WTC11 (cell line): ENCODE measurements at regions of chr1 and their contacts with region 1.

Region 1: GRCh38 chr1:36099681-36100341 is 11.1 kb downstream of the ADPRS start:
- DNase-seq: peak; percentile 92
- ATAC-seq: peak; percentile 76
- H3K4me3 Mint-ChIP-seq: no peak overlapping the region
- H3K27ac Mint-ChIP-seq: no peak overlapping the region
- H3K4me1 Mint-ChIP-seq: peaks cover 16% of the 10 kb centered on the region
- H3K27me3 Mint-ChIP-seq: no peaks in the 10 kb centered on the region
- CTCF ChIP-seq: peak; percentile 76

Region 2: GRCh38 chr1:36070349-36070748 is 29.5 kb before region 1 on chr1:
- CTCF ChIA-PET with region 1: no interaction called
- POLR2A ChIA-PET with region 1: no interaction called
- DNase-seq: no peak
- ATAC-seq: no peak
- H3K4me3 Mint-ChIP-seq: no peak overlapping the region
- H3K27ac Mint-ChIP-seq: no peak overlapping the region
- H3K4me1 Mint-ChIP-seq: peaks cover 11% of the 10 kb centered on the region
- H3K27me3 Mint-ChIP-seq: no peaks in the 10 kb centered on the region
- CTCF ChIP-seq: no peak

Region 3: GRCh38 chr1:36083993-36084738 is 15.6 kb before region 1 on chr1 and contains the start of gene TEKT2:
- CTCF ChIA-PET with region 1: interaction called, 11 read pairs
- POLR2A ChIA-PET with region 1: interaction called, 8 read pairs
- DNase-seq: peak; percentile 87
- ATAC-seq: peak; percentile 49
- H3K4me3 Mint-ChIP-seq: peak within 1 kb of the TSS; percentile 66
- H3K27ac Mint-ChIP-seq: no peak within 1 kb of the TSS
- H3K4me1 Mint-ChIP-seq: peaks cover 9% of the 10 kb centered on the region
- H3K27me3 Mint-ChIP-seq: peaks cover 2% of the 10 kb centered on the region
- CTCF ChIP-seq: no peak
- total RNA-seq, gene TEKT2: 1.9 to 2.5 TPM (median 2.0 TPM) in 3 replicates

Region 4: GRCh38 chr1:36128126-36128904 is 28.5 kb after region 1 on chr1:
- CTCF ChIA-PET with region 1: interaction called, 142 read pairs
- POLR2A ChIA-PET with region 1: no interaction called
- DNase-seq: no peak
- ATAC-seq: no peak
- H3K4me3 Mint-ChIP-seq: no peak overlapping the region
- H3K27ac Mint-ChIP-seq: no peak overlapping the region
- H3K4me1 Mint-ChIP-seq: peaks cover 13% of the 10 kb centered on the region
- H3K27me3 Mint-ChIP-seq: peaks cover 27% of the 10 kb centered on the region
- CTCF ChIP-seq: no peak

Region 5: DNA sequence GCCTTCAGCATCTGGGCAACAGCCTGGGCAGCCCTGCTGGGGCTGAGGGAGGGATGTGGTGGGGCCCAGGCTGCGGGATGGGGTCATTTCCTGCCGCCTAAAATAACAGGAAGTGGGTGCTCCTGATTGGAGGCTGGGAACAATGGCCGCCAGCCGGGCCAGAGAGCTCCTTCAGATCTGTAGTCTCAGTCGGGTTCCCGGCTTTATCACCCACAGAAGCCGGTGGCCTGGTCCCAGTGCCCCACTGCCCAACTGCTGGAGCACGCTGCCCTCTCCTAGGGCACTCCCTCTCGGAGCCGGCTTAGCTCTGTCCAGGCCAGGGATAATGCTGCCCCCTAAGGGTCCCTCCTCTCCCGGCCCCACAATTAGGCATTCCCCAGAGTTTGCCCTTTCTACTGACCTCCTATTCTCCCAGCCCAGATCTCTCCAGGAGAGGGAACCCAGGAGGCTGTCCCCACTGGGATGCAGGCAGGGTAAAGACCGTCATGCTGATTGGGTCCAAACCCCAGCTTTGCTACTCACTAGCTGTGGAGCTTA is 61.2 kb after region 1 on chr1:
- CTCF ChIA-PET with region 1: interaction called, 12 read pairs
- POLR2A ChIA-PET with region 1: no interaction called
- DNase-seq: peak; percentile 71
- ATAC-seq: peak; percentile 76
- H3K4me3 Mint-ChIP-seq: peak overlapping the region; percentile 67
- H3K27ac Mint-ChIP-seq: peak overlapping the region; percentile 88
- H3K4me1 Mint-ChIP-seq: peaks cover 41% of the 10 kb centered on the region
- H3K27me3 Mint-ChIP-seq: no peaks in the 10 kb centered on the region
- CTCF ChIP-seq: no peak

Region 6: DNA sequence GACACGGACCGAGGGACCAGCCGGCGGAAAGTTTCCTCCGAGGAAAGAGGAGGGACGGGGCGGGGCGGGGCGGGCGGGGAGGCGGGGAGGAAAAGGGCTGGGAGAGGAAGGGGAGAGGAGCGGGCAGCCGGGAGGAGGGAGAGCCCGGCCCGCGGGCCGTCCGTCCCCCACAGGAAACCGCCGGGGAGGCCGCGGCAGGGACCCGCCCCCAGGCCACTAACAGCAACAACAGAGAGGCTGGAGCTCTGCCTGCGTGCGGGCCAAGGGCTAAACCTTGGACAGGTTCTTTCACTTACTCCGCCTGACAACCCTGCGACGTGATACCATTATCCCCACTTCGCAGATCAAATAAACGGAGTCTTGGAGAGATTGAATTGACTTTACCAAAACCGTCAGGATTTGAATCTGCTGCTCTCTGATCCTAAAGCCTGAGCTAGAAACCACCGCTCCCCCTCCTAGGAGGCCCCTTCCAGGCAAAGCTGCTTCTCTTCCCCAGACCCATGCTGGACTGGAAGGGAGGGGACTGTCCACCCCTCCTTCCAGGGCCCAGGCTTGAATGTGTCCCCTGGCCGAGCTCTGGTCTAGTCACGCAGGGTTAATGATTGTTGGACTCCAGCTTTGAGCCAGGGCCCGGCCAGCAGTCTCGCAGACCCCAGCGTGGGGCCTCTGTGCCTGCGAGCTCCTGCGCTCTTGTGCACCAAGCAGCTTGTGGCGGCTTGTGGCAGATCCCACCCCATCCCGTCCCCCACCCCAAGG is 224.0 kb after region 1 on chr1 and contains the start of gene EVA1B:
- CTCF ChIA-PET with region 1: interaction called, 10 read pairs
- POLR2A ChIA-PET with region 1: no interaction called
- DNase-seq: peak; percentile 74
- ATAC-seq: peak; percentile 15
- H3K4me3 Mint-ChIP-seq: peak within 1 kb of the TSS; percentile 76
- H3K27ac Mint-ChIP-seq: peak within 1 kb of the TSS; percentile 65
- H3K4me1 Mint-ChIP-seq: peaks cover 25% of the 10 kb centered on the region
- H3K27me3 Mint-ChIP-seq: peaks cover 10% of the 10 kb centered on the region
- CTCF ChIP-seq: no peak
- total RNA-seq, gene EVA1B: 32.0 to 45.2 TPM (median 41.5 TPM) in 3 replicates